ENCODE measurements at regions of chrX and their contacts with region 1.

Region 1: GRCh38 chrX:48521353-48522243 is at the start of gene EBP:
- DNase-seq: peak; percentile 92
- H3K4me3 Mint-ChIP-seq: peak within 1 kb of the TSS; percentile 95
- H3K27ac Mint-ChIP-seq: peak within 1 kb of the TSS; percentile 98
- H3K4me1 Mint-ChIP-seq: peaks cover 34% of the 10 kb centered on the region
- H3K27me3 Mint-ChIP-seq: no peaks in the 10 kb centered on the region
- total RNA-seq, gene EBP: 164 and 178 TPM in 2 replicates

Region 2: DNA sequence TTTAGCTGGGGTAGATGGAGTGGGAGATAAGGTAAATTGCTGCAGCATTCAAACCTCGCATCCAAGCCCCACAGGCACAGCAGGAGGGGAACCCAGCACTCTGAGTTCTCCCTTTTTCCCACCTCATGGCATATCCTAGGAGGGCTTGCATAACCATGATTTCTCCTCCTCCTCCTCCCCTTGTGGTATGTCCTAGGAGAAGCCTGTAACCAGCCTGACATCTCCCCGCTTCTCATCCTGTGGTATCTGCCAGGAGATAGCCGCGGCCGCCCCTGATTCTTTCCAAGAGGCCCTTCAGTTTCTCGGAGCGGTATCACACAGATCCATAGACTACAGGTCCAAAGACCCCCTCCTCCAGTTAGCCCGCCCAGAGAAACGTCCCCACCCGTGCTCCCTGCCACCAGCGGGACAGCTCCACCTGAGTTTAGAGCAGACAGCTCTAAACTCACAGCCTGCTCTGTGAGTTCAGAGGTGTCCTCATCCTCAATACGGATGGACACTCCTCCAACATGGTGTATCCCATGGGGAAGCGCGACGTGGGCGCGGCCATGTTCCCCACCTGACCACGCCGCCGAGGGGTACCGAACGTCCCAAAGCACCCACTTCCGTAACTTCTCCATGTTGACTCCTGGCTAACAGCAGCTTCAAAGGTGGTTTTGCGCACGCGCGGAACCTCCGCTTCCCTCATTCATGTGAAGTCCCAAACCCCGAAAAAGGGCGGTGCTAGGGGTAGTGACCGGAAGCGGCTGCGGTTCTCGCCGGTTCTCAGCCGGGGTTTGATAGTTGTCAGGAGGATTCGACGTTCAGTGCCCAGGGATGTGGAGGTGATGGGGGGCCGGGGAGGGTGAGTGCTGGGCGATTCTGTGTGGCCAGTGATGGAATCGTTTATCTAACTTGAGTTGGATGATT is 685.2 kb before region 1 on chrX and contains the start of gene ZNF81:
- intact Hi-C with region 1: loop called (anchors 10 kb)
- DNase-seq: peak; percentile 87
- H3K4me3 Mint-ChIP-seq: peak within 1 kb of the TSS; percentile 98
- H3K27ac Mint-ChIP-seq: peak within 1 kb of the TSS; percentile 97
- H3K4me1 Mint-ChIP-seq: peaks cover 13% of the 10 kb centered on the region
- H3K27me3 Mint-ChIP-seq: no peaks in the 10 kb centered on the region
- total RNA-seq, gene ZNF81: 5.9 and 9.2 TPM in 2 replicates

Region 3: GRCh38 chrX:48508400-48509244 is 13.0 kb before region 1 on chrX and contains the start of gene PORCN:
- intact Hi-C with region 1: loop called (anchors 1 kb)
- DNase-seq: peak; percentile 73
- H3K4me3 Mint-ChIP-seq: peak within 1 kb of the TSS; percentile 93
- H3K27ac Mint-ChIP-seq: peak within 1 kb of the TSS; percentile 90
- H3K4me1 Mint-ChIP-seq: peaks cover 21% of the 10 kb centered on the region
- H3K27me3 Mint-ChIP-seq: no peaks in the 10 kb centered on the region
- total RNA-seq, gene PORCN: 13.6 and 15.1 TPM in 2 replicates

Region 4: DNA sequence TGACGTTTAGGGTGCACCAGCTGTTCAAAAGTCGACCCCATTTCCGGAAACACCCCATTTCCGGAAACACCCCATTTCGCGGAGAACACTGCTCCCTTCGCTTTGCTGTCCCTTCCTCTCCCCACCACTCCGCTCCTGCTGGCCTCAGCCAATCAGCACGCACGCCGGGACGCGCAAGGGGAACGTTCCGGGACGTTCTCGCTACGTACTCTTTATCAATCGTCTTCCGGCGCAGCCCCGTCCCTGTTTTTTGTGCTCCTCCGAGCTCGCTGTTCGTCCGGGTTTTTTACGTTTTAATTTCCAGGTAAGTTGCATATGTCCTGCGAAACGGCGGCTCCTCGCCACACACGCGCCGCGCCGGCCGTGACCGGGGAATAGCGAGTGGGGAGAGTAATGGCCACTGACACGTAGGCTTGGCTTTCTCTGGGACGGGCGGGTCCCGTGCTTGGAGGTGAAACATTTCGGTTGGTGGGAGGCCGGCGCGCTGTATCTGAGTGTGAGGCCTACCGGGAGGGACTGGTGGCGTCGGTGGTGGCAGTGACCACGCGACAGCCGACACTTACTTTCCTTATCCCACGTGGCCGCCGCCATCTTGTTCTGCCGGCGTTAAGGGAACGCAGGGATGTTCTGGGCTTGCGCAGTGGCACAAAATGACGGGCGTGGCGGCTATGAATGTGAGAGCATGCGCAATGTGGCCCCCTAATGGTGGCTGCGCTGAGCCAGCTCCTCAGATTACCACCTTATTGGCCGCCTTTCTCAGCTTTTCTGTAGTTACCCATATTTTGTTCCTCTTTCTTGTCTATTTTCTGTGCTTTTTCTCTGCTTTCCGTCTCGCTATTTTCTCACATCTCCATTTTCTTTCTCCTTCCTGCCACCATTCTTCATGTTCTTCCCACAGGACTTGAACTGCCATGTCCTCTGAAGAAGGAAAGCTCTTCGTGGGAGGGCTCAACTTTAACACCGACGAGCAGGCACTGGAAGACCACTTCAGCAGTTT is 53.0 kb after region 1 on chrX and contains the start of gene RBM3:
- intact Hi-C with region 1: loop called (anchors 1 kb)
- DNase-seq: peak; percentile 89
- H3K4me3 Mint-ChIP-seq: peak within 1 kb of the TSS; percentile 99
- H3K27ac Mint-ChIP-seq: peak within 1 kb of the TSS; percentile 100
- H3K4me1 Mint-ChIP-seq: peaks cover 19% of the 10 kb centered on the region
- H3K27me3 Mint-ChIP-seq: no peaks in the 10 kb centered on the region
- total RNA-seq, gene RBM3: 318 and 338 TPM in 2 replicates

Region 5: DNA sequence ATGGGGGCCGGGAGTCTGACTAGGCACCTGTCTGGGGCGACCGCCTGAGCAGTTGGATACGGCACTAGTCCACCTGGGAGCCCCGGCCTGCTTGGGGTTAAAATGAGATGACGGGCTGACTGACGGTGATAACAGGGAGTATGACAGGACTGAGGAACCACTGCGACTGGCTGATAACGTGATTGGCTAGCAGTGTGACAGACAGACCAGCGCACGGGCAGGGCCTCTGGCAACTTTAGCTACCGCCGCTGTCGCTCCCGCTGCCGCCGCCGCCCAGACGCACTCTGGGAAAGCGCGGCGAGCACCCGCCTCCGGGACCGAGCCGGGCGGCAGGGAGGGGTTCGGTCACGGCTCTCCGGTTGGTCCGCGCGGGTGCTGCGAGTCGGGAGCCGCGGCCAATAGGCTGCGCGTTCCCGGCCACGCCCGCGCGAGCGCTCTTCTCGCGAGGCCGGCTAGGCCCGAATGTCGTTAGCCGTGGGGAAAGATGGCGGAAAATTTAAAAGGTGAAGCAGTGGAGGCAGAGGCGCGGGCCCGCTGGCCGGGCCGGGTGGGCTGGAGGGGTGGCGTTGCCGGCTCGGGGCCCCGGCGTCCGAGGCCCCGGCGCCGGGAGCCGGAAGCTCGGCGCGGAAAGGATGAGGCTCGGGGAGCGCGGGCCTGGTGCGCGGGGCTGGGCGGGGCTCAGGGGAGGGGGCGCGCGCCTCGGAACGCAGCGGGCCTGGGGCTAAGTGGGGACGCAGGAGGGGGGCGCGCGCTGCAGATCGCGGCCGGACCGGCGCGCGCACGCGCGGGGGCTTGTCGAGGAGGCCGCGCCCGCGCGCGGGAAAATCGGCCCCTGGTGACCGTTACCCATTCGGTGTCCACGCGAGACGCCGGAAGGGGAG is 174.9 kb after region 1 on chrX and contains the start of gene SUV39H1:
- intact Hi-C with region 1: loop called (anchors 5 kb)
- DNase-seq: peak; percentile 85
- H3K4me3 Mint-ChIP-seq: peak within 1 kb of the TSS; percentile 93
- H3K27ac Mint-ChIP-seq: peak within 1 kb of the TSS; percentile 91
- H3K4me1 Mint-ChIP-seq: peaks cover 35% of the 10 kb centered on the region
- H3K27me3 Mint-ChIP-seq: peaks cover 2% of the 10 kb centered on the region
- total RNA-seq, gene SUV39H1: 27.5 and 27.7 TPM in 2 replicates

Measured in activated T-helper 1 cell treated with anti-CD3 and anti-CD28 coated beads, Interleukin-12 subunit alpha, Interleukin-12 subunit beta, Interleukin-2, Interleukin-4 antibody, amounts not matched to agents 30 ng/mL and 10 ng/mL and 1 ng/mL, durations not matched to agents 14 hours and 24 hours and 36 hours (primary cell).